Activated CD4-positive, alpha-beta T cell treated with anti-CD3 and anti-CD28 coated beads for 36 hours (primary cell): ENCODE measurements at regions of chr5 and their contacts with region 1.

Region 1: GRCh38 chr5:14364576-14365472 is 216.8 kb upstream of the OTULINL start:
- DNase-seq: peak; percentile 42
- ATAC-seq: peak; percentile 33
- H3K4me3 Mint-ChIP-seq: no peak overlapping the region
- H3K27ac Mint-ChIP-seq: no peak overlapping the region
- H3K4me1 Mint-ChIP-seq: peaks cover 23% of the 10 kb centered on the region
- H3K27me3 Mint-ChIP-seq: no peaks in the 10 kb centered on the region

Region 2: DNA sequence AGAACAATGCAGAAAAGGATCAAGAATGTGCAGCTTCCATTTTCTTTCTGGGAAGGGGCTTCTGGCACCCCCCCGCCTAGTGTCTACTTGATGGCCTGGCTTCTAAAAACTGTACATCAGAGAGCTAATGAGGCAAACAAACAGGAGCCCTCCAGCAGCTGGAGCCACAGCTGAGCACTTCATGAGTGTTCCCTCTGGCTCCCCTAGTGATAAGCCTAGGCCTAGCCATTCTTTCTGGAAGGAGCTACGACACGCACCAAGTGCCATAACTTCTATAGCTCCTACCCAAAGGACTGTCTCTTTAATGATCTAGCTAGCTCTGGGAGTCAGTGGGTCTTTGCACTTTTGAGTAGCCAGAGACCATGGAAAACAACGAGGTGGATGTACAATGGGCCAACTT is 486.5 kb before region 1 on chr5:
- CTCF ChIA-PET with region 1: no interaction called
- POLR2A ChIA-PET with region 1: no interaction called
- intact Hi-C with region 1: no loop called
- DNase-seq: no peak
- ATAC-seq: no peak
- H3K4me3 Mint-ChIP-seq: no peak overlapping the region
- H3K27ac Mint-ChIP-seq: no peak overlapping the region
- H3K4me1 Mint-ChIP-seq: no peaks in the 10 kb centered on the region
- H3K27me3 Mint-ChIP-seq: no peaks in the 10 kb centered on the region

Region 3: GRCh38 chr5:13987843-13988464 is 376.9 kb before region 1 on chr5:
- CTCF ChIA-PET with region 1: interaction called, 3 read pairs
- POLR2A ChIA-PET with region 1: no interaction called
- intact Hi-C with region 1: loop called (anchors 1 to 5 kb)
- DNase-seq: peak; percentile 61
- ATAC-seq: no peak
- H3K4me3 Mint-ChIP-seq: no peak overlapping the region
- H3K27ac Mint-ChIP-seq: no peak overlapping the region
- H3K4me1 Mint-ChIP-seq: no peaks in the 10 kb centered on the region
- H3K27me3 Mint-ChIP-seq: peaks cover 4% of the 10 kb centered on the region

Region 4: DNA sequence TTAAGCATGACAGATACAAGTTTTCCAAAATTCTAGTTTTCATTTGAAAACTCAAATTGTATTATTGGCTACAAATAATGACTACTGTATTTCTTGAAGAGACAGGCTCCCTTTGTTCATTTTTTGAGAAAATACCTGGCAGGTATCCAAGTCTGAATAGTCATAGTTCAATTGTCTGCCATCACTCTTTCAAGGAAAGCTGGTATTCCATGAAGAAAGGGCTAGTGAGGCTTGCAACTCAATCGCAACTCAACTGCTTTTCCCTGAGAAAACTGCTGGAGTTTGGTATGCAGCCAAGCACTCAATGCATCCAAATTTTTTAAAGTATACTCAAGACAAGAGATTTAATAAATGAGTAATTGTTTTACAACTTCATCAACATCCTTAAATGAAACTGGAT is 283.0 kb before region 1 on chr5:
- CTCF ChIA-PET with region 1: no interaction called
- POLR2A ChIA-PET with region 1: no interaction called
- intact Hi-C with region 1: no loop called
- DNase-seq: no peak
- ATAC-seq: no peak
- H3K4me3 Mint-ChIP-seq: no peak overlapping the region
- H3K27ac Mint-ChIP-seq: no peak overlapping the region
- H3K4me1 Mint-ChIP-seq: no peaks in the 10 kb centered on the region
- H3K27me3 Mint-ChIP-seq: no peaks in the 10 kb centered on the region

Region 5: GRCh38 chr5:14650052-14650451 is 285.2 kb after region 1 on chr5:
- CTCF ChIA-PET with region 1: interaction called, 124 read pairs
- POLR2A ChIA-PET with region 1: no interaction called
- intact Hi-C with region 1: loop called (anchors 1 kb)
- DNase-seq: no peak
- ATAC-seq: no peak
- H3K4me3 Mint-ChIP-seq: no peak overlapping the region
- H3K27ac Mint-ChIP-seq: no peak overlapping the region
- H3K4me1 Mint-ChIP-seq: peaks cover under 1% of the 10 kb centered on the region
- H3K27me3 Mint-ChIP-seq: peaks cover 7% of the 10 kb centered on the region

Region 6: GRCh38 chr5:15037247-15037908 is 672.6 kb after region 1 on chr5:
- CTCF ChIA-PET with region 1: no interaction called
- POLR2A ChIA-PET with region 1: no interaction called
- intact Hi-C with region 1: no loop called
- DNase-seq: no peak
- ATAC-seq: no peak
- H3K4me3 Mint-ChIP-seq: no peak overlapping the region
- H3K27ac Mint-ChIP-seq: no peak overlapping the region
- H3K4me1 Mint-ChIP-seq: no peaks in the 10 kb centered on the region
- H3K27me3 Mint-ChIP-seq: no peaks in the 10 kb centered on the region